ENCODE measurements at regions of chr5 and their contacts with region 1.

Region 1: DNA sequence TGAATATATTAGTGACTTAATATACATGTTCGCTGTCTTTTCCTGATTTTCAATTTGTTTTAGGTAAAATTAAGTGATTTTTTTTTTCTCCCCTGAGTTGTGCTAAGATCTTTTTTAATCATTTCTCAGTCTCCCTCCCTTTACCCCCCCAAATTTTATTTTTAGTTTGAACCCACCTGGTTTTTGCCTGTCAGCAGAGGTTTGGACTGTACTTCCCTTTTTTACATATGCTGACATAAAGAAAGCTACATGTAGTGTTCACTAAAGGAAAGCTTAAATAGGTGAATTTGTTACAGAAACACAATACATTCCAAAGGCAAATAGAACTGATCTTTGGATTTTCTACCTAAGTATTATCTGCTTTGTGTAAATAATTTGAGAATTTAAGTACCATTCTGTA is 82.2 kb downstream of the IPO11 start:
- DNase-seq: peak; percentile 75
- H3K4me3 ChIP-seq: peak overlapping the region; percentile 25
- H3K27ac ChIP-seq: peak overlapping the region; percentile 47
- H3K4me1 ChIP-seq: peaks cover 35% of the 10 kb centered on the region
- CTCF ChIP-seq: no peak

Region 2: GRCh38 chr5:62483556-62483955 is 11.2 kb before region 1 on chr5:
- CTCF ChIA-PET with region 1: no interaction called
- POLR2A ChIA-PET with region 1: interaction called, 10 read pairs
- intact Hi-C with region 1: no loop called
- DNase-seq: no peak
- H3K4me3 ChIP-seq: no peak overlapping the region
- H3K27ac ChIP-seq: no peak overlapping the region
- H3K4me1 ChIP-seq: no peaks in the 10 kb centered on the region
- CTCF ChIP-seq: no peak